CD4-positive, alpha-beta memory T cell (primary cell): ENCODE measurements at regions of chr9 and their contacts with region 1.

Region 1: DNA sequence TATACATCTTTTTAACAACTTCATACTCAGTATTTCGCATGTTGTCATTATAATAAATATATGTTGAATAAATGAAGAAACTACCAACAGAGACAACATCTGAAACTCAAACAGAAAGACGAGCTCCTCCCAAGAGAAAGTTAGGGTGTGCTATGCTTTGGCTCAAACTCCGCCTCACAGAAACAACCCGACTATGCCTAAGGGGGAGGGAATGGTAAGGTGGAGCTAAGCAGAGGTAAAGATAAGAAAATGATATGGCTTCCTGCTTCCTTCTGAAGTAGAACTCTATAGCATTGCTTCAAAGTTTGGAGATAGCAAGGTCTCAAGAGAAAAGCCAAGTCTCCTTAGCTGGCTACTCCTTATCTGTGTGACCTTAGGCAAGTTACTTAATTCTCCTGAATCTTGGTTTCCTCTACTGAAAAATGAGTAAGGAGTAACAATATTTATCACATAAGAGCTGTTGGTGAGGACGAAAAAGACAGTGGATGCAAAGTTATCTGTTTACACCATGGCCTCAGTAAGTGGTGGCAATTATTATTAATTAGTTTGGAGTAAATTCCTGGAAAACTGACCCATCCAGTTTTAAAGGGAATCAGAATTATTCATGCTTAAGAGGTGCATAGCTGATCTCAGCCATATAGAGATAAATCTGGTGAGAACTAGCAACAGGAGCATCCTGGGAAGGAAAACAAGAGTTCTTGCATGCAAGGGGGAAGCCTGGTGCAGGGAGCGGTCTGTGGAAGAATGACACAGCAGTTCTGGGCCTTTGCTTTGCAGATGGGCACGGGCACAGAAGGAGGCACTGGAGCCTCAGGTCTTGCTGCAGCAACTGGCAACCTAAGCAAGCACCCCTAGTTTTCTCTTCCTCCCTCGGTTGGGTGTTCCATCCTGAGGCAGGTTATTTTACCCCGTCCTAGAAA is 73.3 kb downstream of the GLIS3 start:
- DNase-seq: no peak
- H3K4me3 ChIP-seq: no peak overlapping the region
- H3K4me3 Mint-ChIP-seq: no peak overlapping the region
- H3K27ac ChIP-seq: no peak overlapping the region
- H3K27ac Mint-ChIP-seq: no peak overlapping the region
- H3K4me1 ChIP-seq: no peaks in the 10 kb centered on the region
- H3K4me1 Mint-ChIP-seq: peaks cover 0 to 3% (median 0%) of the 10 kb centered on the region in 4 donors
- H3K27me3 ChIP-seq: no peaks in the 10 kb centered on the region
- H3K27me3 Mint-ChIP-seq: peaks cover 12 to 17% of the 10 kb centered on the region in 2 donors

Region 2: GRCh38 chr9:4214486-4214885 is 12.1 kb before region 1 on chr9:
- CTCF ChIA-PET with region 1: no interaction called
- POLR2A ChIA-PET with region 1: no interaction called
- intact Hi-C with region 1: loop called (anchors 1 kb)
- DNase-seq: no peak
- H3K4me3 ChIP-seq: no peak overlapping the region
- H3K4me3 Mint-ChIP-seq: no peak overlapping the region
- H3K27ac ChIP-seq: no peak overlapping the region
- H3K27ac Mint-ChIP-seq: no peak overlapping the region
- H3K4me1 ChIP-seq: no peaks in the 10 kb centered on the region
- H3K4me1 Mint-ChIP-seq: no peaks in the 10 kb centered on the region
- H3K27me3 ChIP-seq: no peaks in the 10 kb centered on the region
- H3K27me3 Mint-ChIP-seq: peaks cover 0 to 5% of the 10 kb centered on the region in 2 donors